GM10248 (cell line): ENCODE measurements at regions of chr9 and their contacts with region 1.

Region 1: GRCh38 chr9:136790927-136791641 is at the start of gene TMEM141:
- DNase-seq: peak; percentile 99
- CTCF ChIP-seq: peak; percentile 1

Region 2: GRCh38 chr9:136777359-136777758 is 13.7 kb before region 1 on chr9:
- CTCF ChIA-PET with region 1: interaction called, 32 read pairs
- POLR2A ChIA-PET with region 1: no interaction called
- DNase-seq: no peak
- CTCF ChIP-seq: no peak

Region 3: GRCh38 chr9:136807281-136808074 is 16.4 kb after region 1 on chr9 and contains the start of gene RABL6:
- CTCF ChIA-PET with region 1: interaction called, 21 read pairs
- POLR2A ChIA-PET with region 1: no interaction called
- DNase-seq: peak; percentile 97
- CTCF ChIP-seq: no peak